Thyroid gland (tissue), 4 donors: ENCODE measurements at regions of chr12 and their contacts with region 1.

Region 1: DNA sequence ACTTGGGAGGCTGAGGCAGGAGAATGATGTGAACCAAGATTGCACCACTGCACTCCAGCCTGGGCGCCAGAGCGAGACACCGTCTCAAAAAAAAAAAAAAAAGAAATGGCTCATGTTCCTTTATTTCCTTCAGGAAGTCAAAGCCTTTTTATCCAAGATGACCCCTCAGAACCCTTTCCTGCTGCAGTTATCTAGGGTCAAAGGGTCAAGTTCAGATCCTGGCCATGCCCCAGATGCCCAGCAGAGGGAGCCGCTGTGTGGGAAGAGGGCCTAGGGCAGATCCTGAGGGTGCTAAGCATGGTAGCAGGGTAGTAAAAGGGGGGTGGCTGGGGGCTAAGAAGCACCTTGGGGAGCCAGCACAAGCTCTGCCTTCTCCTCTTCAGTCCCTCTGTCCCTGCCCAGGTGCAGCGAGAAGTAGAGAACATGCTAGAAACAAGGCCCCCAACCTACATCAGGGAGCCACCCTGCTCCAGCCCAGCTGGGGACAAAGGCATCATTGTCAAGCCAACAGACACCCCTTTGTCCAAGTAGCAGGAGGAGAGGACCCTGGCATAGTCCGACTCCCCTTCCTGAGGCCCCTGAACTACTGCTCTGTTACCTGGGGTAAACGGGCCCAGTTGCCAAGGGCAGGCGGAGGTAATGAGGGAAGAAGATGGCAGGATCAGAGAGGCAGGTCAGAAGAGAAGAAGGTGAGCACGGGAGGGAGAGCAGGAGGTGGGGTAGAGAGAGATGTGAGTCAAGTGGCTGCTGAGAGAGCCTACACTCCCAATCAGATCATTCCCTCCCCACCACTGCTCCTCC is 6.5 kb downstream of the NFE2 start:
- DNase-seq: peak; percentile 32 to 47
- H3K4me3 ChIP-seq: no peak overlapping the region
- H3K27ac ChIP-seq: no peak overlapping the region
- H3K4me1 ChIP-seq: no peaks in the 10 kb centered on the region
- H3K27me3 ChIP-seq: no peaks in the 10 kb centered on the region
- CTCF ChIP-seq: peak; percentile 37 to 74 (median 64)
- POLR2A ChIP-seq: no peak

Region 2: GRCh38 chr12:54324617-54325441 is 30.5 kb after region 1 on chr12 and contains the start of gene COPZ1:
- intact Hi-C with region 1: loop called (anchors 5 kb)
- DNase-seq: peak; percentile 97
- H3K4me3 ChIP-seq: peak within 1 kb of the TSS; percentile 52 to 91 (median 61)
- H3K27ac ChIP-seq: peak within 1 kb of the TSS; percentile 66 to 90 (median 90)
- H3K4me1 ChIP-seq: peaks cover 26 to 27% of the 10 kb centered on the region in 2 donors
- H3K27me3 ChIP-seq: no peaks in the 10 kb centered on the region
- CTCF ChIP-seq: peak in 5 of 6 experiments; percentile 58 to 83 (median 68)
- POLR2A ChIP-seq: peak; percentile 80 to 95
- total RNA-seq, gene COPZ1: 181 to 284 (median 236) TPM

Region 3: GRCh38 chr12:54360717-54361456 is 66.5 kb after region 1 on chr12:
- intact Hi-C with region 1: loop called (anchors 5 kb)
- DNase-seq: peak; percentile 88 to 89
- H3K4me3 ChIP-seq: no peak overlapping the region
- H3K27ac ChIP-seq: peak overlapping the region in 2 of 3 donors; percentile 89 to 95
- H3K4me1 ChIP-seq: peaks cover 19 to 37% of the 10 kb centered on the region in 2 donors
- H3K27me3 ChIP-seq: no peaks in the 10 kb centered on the region
- CTCF ChIP-seq: peak; percentile 70 to 99 (median 88)
- POLR2A ChIP-seq: no peak

Region 4: DNA sequence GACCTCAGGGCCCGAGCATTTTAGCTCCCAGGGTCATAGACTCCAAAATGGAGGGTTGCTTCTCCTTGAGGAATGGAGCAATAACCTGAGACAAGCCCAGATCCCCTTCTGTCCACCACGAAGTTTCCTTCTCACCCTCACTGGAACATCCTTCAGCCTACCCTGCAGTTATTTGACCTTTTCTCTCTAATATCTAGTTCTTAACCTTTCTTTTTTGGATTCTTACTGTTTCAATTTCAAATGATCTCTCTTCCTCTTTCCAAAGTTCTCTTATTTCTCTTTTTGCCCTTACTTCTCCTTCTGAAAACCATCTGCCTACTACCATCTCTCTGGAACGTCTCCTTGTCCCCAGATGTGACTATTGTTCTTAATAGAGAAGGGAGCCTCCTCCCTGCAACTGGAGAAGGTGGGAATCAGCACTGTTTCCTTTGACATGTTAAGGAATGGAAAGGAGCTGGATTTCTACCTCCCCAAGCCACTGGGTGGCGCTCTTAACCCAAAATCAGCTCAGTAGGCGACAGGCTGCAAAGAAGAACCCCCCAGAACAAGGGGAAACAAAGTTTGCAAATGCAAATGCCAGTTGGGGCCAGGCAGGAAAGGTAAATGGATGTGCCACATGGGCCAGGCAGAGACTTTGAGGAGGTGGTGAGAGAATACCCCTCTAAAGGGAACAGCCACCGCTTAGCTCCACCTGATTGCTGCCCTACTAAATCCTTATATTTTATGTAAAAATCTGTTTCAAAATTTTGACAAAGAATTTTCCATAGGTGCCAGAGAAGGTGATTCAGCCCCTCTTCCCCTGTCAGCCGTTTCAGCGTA is 232.7 kb after region 1 on chr12:
- intact Hi-C with region 1: no loop called
- DNase-seq: peak; percentile 38 to 44
- H3K4me3 ChIP-seq: no peak overlapping the region
- H3K27ac ChIP-seq: no peak overlapping the region
- H3K4me1 ChIP-seq: no peaks in the 10 kb centered on the region
- H3K27me3 ChIP-seq: no peaks in the 10 kb centered on the region
- CTCF ChIP-seq: peak; percentile 22 to 52 (median 38)
- POLR2A ChIP-seq: no peak